CD8-positive, alpha-beta memory T cell (primary cell): ENCODE measurements at regions of chr14 and their contacts with region 1.

Region 1: GRCh38 chr14:73741386-73741875 is 27.2 kb upstream of the PNMA1 start:
- DNase-seq: peak; percentile 62 to 79 (median 66)
- H3K4me3 ChIP-seq: peak overlapping the region; percentile 62
- H3K4me3 Mint-ChIP-seq: peak overlapping the region; percentile 79 to 94 (median 85)
- H3K27ac ChIP-seq: peak overlapping the region; percentile 68
- H3K27ac Mint-ChIP-seq: peak overlapping the region; percentile 91 to 98 (median 95)
- H3K4me1 ChIP-seq: peaks cover 66% of the 10 kb centered on the region
- H3K4me1 Mint-ChIP-seq: peaks cover 59 to 88% (median 64%) of the 10 kb centered on the region in 3 donors
- H3K27me3 ChIP-seq: no peaks in the 10 kb centered on the region
- H3K27me3 Mint-ChIP-seq: no peaks in the 10 kb centered on the region

Region 2: GRCh38 chr14:73753959-73754882 is 12.8 kb after region 1 on chr14:
- CTCF ChIA-PET with region 1: interaction called, 137 read pairs
- POLR2A ChIA-PET with region 1: interaction called, 67 read pairs
- DNase-seq: peak in 1 of 5 donors; percentile 43
- H3K4me3 ChIP-seq: peak overlapping the region; percentile 42
- H3K4me3 Mint-ChIP-seq: peak overlapping the region; percentile 85 to 97 (median 90)
- H3K27ac ChIP-seq: peak overlapping the region; percentile 65
- H3K27ac Mint-ChIP-seq: peak overlapping the region; percentile 94 to 100 (median 98)
- H3K4me1 ChIP-seq: peaks cover 91% of the 10 kb centered on the region
- H3K4me1 Mint-ChIP-seq: peaks cover 91 to 95% (median 92%) of the 10 kb centered on the region in 3 donors
- H3K27me3 ChIP-seq: no peaks in the 10 kb centered on the region
- H3K27me3 Mint-ChIP-seq: peaks cover 0 to 5% of the 10 kb centered on the region in 2 donors

Region 3: GRCh38 chr14:73870525-73871235 is 129.2 kb after region 1 on chr14:
- CTCF ChIA-PET with region 1: no interaction called
- POLR2A ChIA-PET with region 1: no interaction called
- DNase-seq: no peak
- H3K4me3 ChIP-seq: no peak overlapping the region
- H3K4me3 Mint-ChIP-seq: no peak overlapping the region
- H3K27ac ChIP-seq: no peak overlapping the region
- H3K27ac Mint-ChIP-seq: no peak overlapping the region
- H3K4me1 ChIP-seq: no peaks in the 10 kb centered on the region
- H3K4me1 Mint-ChIP-seq: no peaks in the 10 kb centered on the region
- H3K27me3 ChIP-seq: no peaks in the 10 kb centered on the region
- H3K27me3 Mint-ChIP-seq: peaks cover 0 to 1% of the 10 kb centered on the region in 2 donors

Region 4: DNA sequence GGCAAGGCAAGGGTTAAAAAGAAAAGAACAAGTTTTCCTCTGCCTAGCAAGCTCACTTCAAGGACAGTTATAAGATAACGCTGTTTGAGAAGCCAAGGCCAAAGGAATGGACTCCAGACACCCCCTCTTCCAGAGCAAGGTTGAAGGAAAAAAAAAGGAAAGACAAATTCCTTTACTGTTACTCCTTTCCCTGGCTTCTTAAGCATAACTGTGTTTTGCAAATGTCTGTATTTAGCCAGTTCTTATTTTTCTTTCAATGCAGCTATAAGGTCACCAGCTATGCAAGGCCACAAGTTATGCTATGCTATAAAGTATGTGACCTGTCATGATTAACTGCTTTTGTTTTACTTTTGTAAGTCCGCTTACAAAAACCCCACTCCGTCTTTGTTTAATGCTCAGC is 171.8 kb after region 1 on chr14:
- CTCF ChIA-PET with region 1: no interaction called
- POLR2A ChIA-PET with region 1: no interaction called
- DNase-seq: no peak
- H3K4me3 ChIP-seq: no peak overlapping the region
- H3K4me3 Mint-ChIP-seq: no peak overlapping the region
- H3K27ac ChIP-seq: no peak overlapping the region
- H3K27ac Mint-ChIP-seq: no peak overlapping the region
- H3K4me1 ChIP-seq: no peaks in the 10 kb centered on the region
- H3K4me1 Mint-ChIP-seq: peaks cover 9 to 16% (median 10%) of the 10 kb centered on the region in 3 donors
- H3K27me3 ChIP-seq: no peaks in the 10 kb centered on the region
- H3K27me3 Mint-ChIP-seq: no peaks in the 10 kb centered on the region

Region 5: DNA sequence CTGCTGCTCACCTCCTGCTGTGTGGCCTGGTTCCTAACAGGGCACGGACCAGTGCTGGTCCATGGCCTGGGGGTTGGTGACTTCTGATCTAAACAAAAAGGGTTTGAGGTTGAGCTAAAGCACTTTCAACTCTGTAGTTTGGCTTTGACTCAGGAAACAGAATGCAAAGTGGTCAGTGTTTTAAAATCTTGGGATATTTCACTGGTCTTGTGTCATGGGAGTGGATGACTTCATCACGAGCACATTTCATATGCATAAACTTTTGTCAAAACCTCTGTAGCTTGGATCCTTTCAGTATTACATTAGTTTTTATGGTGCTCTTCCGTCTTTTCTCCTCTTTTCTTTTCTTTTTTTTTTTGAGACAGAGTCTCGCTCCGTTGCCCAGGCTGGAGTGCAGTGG is 182.9 kb after region 1 on chr14:
- CTCF ChIA-PET with region 1: no interaction called
- POLR2A ChIA-PET with region 1: no interaction called
- DNase-seq: no peak
- H3K4me3 ChIP-seq: no peak overlapping the region
- H3K4me3 Mint-ChIP-seq: no peak overlapping the region
- H3K27ac ChIP-seq: no peak overlapping the region
- H3K27ac Mint-ChIP-seq: peak overlapping the region in 1 of 8 donors; percentile 11
- H3K4me1 ChIP-seq: no peaks in the 10 kb centered on the region
- H3K4me1 Mint-ChIP-seq: peaks cover 0 to 4% (median 3%) of the 10 kb centered on the region in 3 donors
- H3K27me3 ChIP-seq: no peaks in the 10 kb centered on the region
- H3K27me3 Mint-ChIP-seq: no peaks in the 10 kb centered on the region